ENCODE measurements at regions of chr17 and their contacts with region 1.

Region 1: DNA sequence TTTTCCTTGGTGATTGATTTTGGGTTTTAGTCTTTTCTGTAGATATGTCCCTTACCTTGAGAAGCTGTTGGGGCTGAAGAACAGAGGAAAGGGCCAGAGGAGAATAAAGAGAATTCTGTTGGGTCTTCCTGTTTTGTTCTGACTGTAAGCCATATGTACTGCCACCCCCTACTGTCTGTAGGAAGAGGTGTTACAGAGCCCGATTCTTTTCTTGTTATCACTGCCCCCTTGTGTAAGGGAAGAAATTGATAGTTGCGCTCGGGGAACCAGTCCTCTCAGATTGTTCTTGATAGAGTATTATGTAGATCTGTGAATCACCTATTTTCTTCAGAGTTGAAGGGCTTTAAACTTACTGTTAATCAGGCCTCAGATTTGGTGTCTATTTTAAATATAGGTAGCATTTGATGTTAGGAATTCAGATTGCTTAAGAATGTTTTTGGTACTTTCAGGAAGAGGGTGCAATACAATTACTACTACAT is 2.4 kb downstream of the TANC2 start:
- DNase-seq: peak; percentile 62
- ATAC-seq: peak; percentile 67
- H3K4me3 Mint-ChIP-seq: no peak overlapping the region
- H3K27ac Mint-ChIP-seq: no peak overlapping the region
- H3K4me1 Mint-ChIP-seq: peaks cover 26% of the 10 kb centered on the region
- H3K27me3 Mint-ChIP-seq: peaks cover 16% of the 10 kb centered on the region

Region 2: GRCh38 chr17:62478433-62478879 is 490.0 kb before region 1 on chr17 and contains the start of gene TLK2:
- CTCF ChIA-PET with region 1: no interaction called
- POLR2A ChIA-PET with region 1: no interaction called
- intact Hi-C with region 1: loop called in 1 of 2 experiments (anchors 5 kb)
- DNase-seq: peak; percentile 88
- ATAC-seq: peak; percentile 83
- H3K4me3 Mint-ChIP-seq: peak within 1 kb of the TSS; percentile 93
- H3K27ac Mint-ChIP-seq: peak within 1 kb of the TSS; percentile 96
- H3K4me1 Mint-ChIP-seq: peaks cover 28% of the 10 kb centered on the region
- H3K27me3 Mint-ChIP-seq: no peaks in the 10 kb centered on the region
- total RNA-seq, gene TLK2: 37.4 to 60.2 TPM

Region 3: GRCh38 chr17:62653002-62653825 is 315.3 kb before region 1 on chr17:
- CTCF ChIA-PET with region 1: interaction called, 3 read pairs
- POLR2A ChIA-PET with region 1: no interaction called
- intact Hi-C with region 1: loop called (anchors 1 kb)
- DNase-seq: peak; percentile 97
- ATAC-seq: peak; percentile 95
- H3K4me3 Mint-ChIP-seq: peak overlapping the region; percentile 65
- H3K27ac Mint-ChIP-seq: peak overlapping the region; percentile 65
- H3K4me1 Mint-ChIP-seq: peaks cover 23% of the 10 kb centered on the region
- H3K27me3 Mint-ChIP-seq: peaks cover 19% of the 10 kb centered on the region

Region 4: DNA sequence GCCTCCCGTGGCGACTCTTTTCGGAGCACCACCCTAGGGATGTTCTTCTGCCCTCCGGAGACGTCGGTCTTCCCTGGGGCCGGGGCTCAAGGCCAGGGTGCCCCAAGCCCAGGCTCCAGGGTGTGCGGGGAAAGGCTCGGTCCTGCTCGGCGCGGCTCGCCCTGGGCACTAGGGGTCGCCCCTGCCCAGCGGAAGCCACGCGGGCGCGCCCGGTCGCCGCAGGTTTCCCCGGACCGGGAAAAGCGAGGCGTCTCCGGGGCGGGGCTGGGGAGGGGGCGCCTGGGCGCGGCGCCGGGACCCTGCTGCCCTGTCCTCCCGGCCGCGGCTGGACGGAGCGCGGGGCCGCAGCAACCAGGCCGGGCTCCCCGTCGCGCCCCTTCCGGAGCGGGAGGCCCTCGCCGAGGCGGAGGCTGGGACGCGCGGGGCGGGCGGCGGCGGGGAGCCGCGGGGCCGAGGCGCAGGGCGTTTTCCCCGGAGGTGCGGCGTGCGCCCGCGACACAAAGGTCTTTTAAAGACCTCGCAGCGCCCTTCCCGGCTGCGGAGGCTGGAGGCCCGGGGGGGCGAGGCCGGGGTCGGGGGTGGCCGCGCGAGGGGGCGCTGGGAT is 264.6 kb before region 1 on chr17:
- CTCF ChIA-PET with region 1: no interaction called
- POLR2A ChIA-PET with region 1: no interaction called
- intact Hi-C with region 1: loop called (anchors 1 kb)
- DNase-seq: peak; percentile 81
- ATAC-seq: peak; percentile 92
- H3K4me3 Mint-ChIP-seq: peak overlapping the region; percentile 32
- H3K27ac Mint-ChIP-seq: no peak overlapping the region
- H3K4me1 Mint-ChIP-seq: peaks cover 6% of the 10 kb centered on the region
- H3K27me3 Mint-ChIP-seq: peaks cover 34% of the 10 kb centered on the region

Region 5: GRCh38 chr17:62824293-62825131 is 144.0 kb before region 1 on chr17:
- CTCF ChIA-PET with region 1: no interaction called
- POLR2A ChIA-PET with region 1: no interaction called
- intact Hi-C with region 1: no loop called
- DNase-seq: no peak
- ATAC-seq: no peak
- H3K4me3 Mint-ChIP-seq: no peak overlapping the region
- H3K27ac Mint-ChIP-seq: no peak overlapping the region
- H3K4me1 Mint-ChIP-seq: peaks cover 4% of the 10 kb centered on the region
- H3K27me3 Mint-ChIP-seq: peaks cover 8% of the 10 kb centered on the region

Region 6: DNA sequence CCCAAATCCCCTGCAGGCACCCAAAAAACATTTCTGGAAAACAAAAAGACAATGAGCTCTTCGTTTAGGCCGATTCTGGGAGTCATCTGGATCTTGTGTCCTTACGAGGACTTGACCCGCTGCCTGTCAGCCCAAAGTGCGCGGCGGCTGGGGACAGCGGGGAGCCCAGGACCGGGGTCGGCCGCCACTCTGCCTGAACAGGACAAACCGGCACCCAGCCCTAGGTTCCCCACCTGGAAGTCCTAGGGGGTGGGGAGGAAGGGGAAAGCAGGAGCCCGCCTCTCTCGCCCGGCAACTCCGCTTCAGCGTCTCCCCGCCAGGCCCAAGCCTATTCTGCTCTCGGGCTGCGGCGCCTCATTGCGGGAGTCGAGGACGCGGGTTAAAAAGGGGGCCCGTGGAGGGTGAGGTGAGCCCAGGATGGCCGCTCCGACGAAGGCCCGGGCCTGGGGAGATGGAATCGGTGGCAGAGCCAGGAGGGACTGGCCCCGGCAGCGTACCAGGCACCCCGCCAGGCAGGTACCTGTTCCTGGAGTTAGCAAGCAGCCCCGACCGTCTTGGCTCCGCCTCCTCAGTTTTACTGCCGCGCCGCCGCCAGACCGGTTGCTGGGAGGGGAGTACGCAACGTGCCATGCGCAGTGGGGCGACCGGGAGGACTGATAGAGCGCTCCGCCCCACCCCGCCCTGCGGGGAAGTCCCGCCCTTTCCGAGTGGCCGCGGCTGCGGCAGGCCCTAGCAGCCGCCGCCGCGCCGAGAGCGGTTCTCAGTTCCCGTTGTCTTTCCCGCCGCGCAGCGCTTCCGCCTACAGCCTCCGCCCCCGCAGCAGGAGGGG is 773.0 kb after region 1 on chr17 and contains the start of gene STRADA:
- CTCF ChIA-PET with region 1: no interaction called
- POLR2A ChIA-PET with region 1: no interaction called
- intact Hi-C with region 1: loop called in 1 of 2 experiments (anchors 5 kb)
- DNase-seq: peak; percentile 100
- ATAC-seq: peak; percentile 94
- H3K4me3 Mint-ChIP-seq: peak within 1 kb of the TSS; percentile 91
- H3K27ac Mint-ChIP-seq: peak within 1 kb of the TSS; percentile 95
- H3K4me1 Mint-ChIP-seq: peaks cover 29% of the 10 kb centered on the region
- H3K27me3 Mint-ChIP-seq: no peaks in the 10 kb centered on the region
- total RNA-seq, gene STRADA: 51.0 to 53.6 TPM

Measured in activated CD4-positive, alpha-beta T cell treated with anti-CD3 and anti-CD28 coated beads for 36 hours (primary cell).